ENCODE measurements at regions of chr3 and their contacts with region 1.

Region 1: DNA sequence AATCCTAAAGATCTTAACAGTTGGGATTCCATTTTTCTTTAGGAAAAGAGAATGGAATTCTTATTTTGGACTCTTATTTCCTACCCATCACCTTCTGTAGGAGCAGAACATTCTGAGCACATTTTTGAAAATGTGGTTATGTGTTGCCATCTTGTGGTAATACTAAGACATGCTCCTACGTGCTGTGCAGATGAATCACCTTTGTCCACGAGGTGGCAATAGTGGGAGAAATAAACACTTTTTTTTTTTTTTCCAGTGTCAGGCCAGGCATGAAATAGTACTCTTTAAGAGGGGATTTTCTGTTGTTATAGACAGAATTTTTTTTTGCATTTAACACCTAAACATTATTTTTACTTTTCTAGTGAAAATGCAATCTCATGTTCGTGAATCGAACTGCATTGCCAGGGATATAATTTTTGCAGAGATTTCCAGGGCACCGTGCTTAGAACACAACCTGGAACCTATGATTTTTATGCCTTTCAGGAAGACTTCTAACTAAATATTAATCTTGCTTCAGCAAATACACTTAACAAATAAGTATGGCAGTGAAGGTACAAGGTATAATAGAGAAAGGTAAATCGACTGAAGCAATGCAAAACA is 196.6 kb downstream of the GAP43 start:
- DNase-seq: peak; percentile 90
- ATAC-seq: peak; percentile 91
- H3K4me3 ChIP-seq: no peak overlapping the region
- H3K27ac ChIP-seq: no peak overlapping the region
- H3K4me1 ChIP-seq: no peaks in the 10 kb centered on the region
- H3K27me3 ChIP-seq: no peaks in the 10 kb centered on the region
- CTCF ChIP-seq: peak; percentile 100; the same call in 1 of the 2 replicates
- POLR2A ChIP-seq: no peak
- RAD21 ChIP-seq: peak; percentile 91

Region 2: GRCh38 chr3:114362815-114363214 is 1457.1 kb before region 1 on chr3:
- CTCF ChIA-PET with region 1: no interaction called
- POLR2A ChIA-PET with region 1: no interaction called
- dilution Hi-C with region 1: no loop called
- in situ Hi-C with region 1: loop called (anchors 25 kb)
- intact Hi-C with region 1: no loop called
- DNase-seq: peak; percentile 48
- ATAC-seq: peak; percentile 53
- H3K4me3 ChIP-seq: no peak overlapping the region
- H3K27ac ChIP-seq: no peak overlapping the region
- H3K4me1 ChIP-seq: 0 out of 2 replicates have a peak, but pooled peaks cover 1% of the 10 kb centered on the region
- H3K27me3 ChIP-seq: no peaks in the 10 kb centered on the region
- CTCF ChIP-seq: peak; percentile 52
- POLR2A ChIP-seq: no peak
- RAD21 ChIP-seq: peak; percentile 60

Region 3: DNA sequence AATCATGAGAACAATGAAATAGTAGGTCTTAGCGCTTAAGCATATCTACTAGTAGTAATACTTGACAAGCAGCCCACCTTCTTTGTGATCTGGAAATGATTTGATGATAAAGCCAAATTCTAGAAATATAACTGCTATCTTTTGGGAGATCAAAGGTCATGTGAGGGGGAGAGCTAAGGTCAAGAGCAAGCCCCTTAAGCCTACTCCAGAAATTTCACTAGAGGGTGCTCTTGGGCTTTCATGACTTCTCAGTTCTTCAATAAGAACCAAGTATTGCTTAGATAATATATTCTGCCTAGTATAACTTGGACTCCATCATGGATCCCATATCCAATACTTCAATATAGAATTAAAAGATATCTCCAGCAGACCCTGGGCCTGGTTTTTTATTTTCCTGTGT is 992.4 kb before region 1 on chr3:
- CTCF ChIA-PET with region 1: interaction called, 3 read pairs
- POLR2A ChIA-PET with region 1: no interaction called
- dilution Hi-C with region 1: no loop called
- in situ Hi-C with region 1: loop called (anchors 25 kb)
- intact Hi-C with region 1: loop called (anchors 10 kb)
- DNase-seq: peak; percentile 58
- ATAC-seq: peak; percentile 77
- H3K4me3 ChIP-seq: no peak overlapping the region
- H3K27ac ChIP-seq: no peak overlapping the region
- H3K4me1 ChIP-seq: no peaks in the 10 kb centered on the region
- H3K27me3 ChIP-seq: no peaks in the 10 kb centered on the region
- CTCF ChIP-seq: peak; percentile 61
- POLR2A ChIP-seq: no peak
- RAD21 ChIP-seq: peak; percentile 74

Region 4: GRCh38 chr3:115040673-115041286 is 779.1 kb before region 1 on chr3:
- CTCF ChIA-PET with region 1: no interaction called
- POLR2A ChIA-PET with region 1: no interaction called
- dilution Hi-C with region 1: no loop called
- in situ Hi-C with region 1: no loop called
- intact Hi-C with region 1: loop called (anchors 10 kb)
- DNase-seq: peak; percentile 52
- ATAC-seq: peak; percentile 65
- H3K4me3 ChIP-seq: no peak overlapping the region
- H3K27ac ChIP-seq: no peak overlapping the region
- H3K4me1 ChIP-seq: peaks cover 2% of the 10 kb centered on the region; the same call in 1 of the 2 replicates
- H3K27me3 ChIP-seq: no peaks in the 10 kb centered on the region
- CTCF ChIP-seq: peak; percentile 72
- POLR2A ChIP-seq: no peak
- RAD21 ChIP-seq: peak; percentile 62

Region 5: DNA sequence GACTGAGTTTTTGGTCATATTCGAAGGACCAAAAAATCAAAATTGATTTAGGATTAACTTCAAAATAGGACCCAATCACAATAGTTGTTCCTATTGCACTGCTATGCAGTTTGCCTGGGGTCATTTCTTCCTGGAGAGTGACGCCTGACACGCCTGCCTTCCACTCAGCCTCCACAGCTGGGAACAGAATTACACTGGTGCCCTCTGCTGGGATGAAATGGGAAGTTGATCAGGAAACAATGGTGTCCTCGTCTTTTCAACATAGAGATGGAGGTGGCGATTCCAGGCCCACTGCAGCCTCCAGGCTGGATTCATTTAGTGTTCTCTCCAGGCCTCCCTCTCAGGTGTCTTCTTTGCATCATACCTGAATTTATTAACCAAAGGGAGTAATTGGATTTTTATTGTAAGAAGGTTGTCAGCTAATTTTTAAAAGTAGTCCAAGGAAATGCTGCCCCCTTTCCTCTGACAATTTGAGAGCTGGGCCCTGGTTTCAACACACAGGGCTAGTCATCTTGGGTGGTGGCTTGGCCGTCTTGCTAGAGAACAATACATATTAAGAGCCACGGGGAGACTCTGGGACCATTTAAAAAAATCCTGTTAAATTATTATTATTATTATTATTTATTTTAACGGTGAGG is 126.9 kb before region 1 on chr3:
- CTCF ChIA-PET with region 1: interaction called, 8 read pairs
- POLR2A ChIA-PET with region 1: no interaction called
- dilution Hi-C with region 1: no loop called
- in situ Hi-C with region 1: loop called (anchors 5 kb)
- intact Hi-C with region 1: no loop called
- DNase-seq: peak; percentile 72
- ATAC-seq: peak; percentile 97
- H3K4me3 ChIP-seq: no peak overlapping the region
- H3K27ac ChIP-seq: no peak overlapping the region
- H3K4me1 ChIP-seq: peaks cover 5% of the 10 kb centered on the region
- H3K27me3 ChIP-seq: no peaks in the 10 kb centered on the region
- CTCF ChIP-seq: peak; percentile 86
- POLR2A ChIP-seq: peak; percentile 23; the same call in 1 of the 2 replicates
- RAD21 ChIP-seq: peak; percentile 98

Region 6: DNA sequence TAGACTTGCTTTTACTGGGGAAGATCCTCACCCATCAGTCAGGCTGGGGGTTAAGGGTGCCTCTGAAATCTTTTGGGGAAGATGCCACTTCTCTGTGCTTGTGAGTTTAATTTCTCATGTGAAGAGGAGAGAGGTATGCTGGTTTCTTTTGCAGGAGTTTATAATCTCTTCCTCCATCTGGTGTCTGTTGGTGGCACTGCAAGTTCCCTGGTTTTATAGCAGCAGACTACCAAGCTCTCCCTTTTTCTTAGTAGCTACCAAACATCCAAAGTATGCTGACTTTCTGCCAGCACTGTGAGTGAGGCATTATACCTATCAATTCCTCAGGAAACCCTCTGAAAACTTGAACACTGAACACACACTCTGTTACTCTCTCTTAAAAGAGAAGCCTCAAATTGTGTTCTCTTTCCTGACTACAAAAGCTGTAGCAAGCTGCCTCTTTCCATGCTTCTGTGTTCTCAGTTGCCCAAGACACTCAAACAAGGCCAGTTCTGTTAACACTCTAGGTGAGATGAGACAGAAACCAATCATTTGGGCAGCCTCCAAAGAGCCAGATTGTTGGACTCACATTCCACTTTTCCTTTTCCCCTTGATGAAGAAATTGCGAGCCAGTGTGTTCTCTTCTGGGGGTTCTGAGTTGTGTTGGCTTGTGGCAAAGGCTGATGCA is 102.9 kb after region 1 on chr3:
- CTCF ChIA-PET with region 1: no interaction called
- POLR2A ChIA-PET with region 1: no interaction called
- dilution Hi-C with region 1: no loop called
- in situ Hi-C with region 1: no loop called
- intact Hi-C with region 1: loop called (anchors 2 kb)
- DNase-seq: peak; percentile 62
- ATAC-seq: peak; percentile 98
- H3K4me3 ChIP-seq: no peak overlapping the region
- H3K27ac ChIP-seq: no peak overlapping the region
- H3K4me1 ChIP-seq: no peaks in the 10 kb centered on the region
- H3K27me3 ChIP-seq: no peaks in the 10 kb centered on the region
- CTCF ChIP-seq: peak; percentile 58
- POLR2A ChIP-seq: no peak
- RAD21 ChIP-seq: peak; percentile 42; the same call in 1 of the 2 replicates